ENCODE measurements at regions of chr2 and their contacts with region 1.

Region 1: GRCh38 chr2:86518481-86518880 is 44.8 kb downstream of the CHMP3 start:
- DNase-seq: peak; percentile 49
- H3K4me3 ChIP-seq: no peak overlapping the region
- H3K27ac ChIP-seq: no peak overlapping the region
- H3K4me1 ChIP-seq: no peaks in the 10 kb centered on the region
- H3K27me3 ChIP-seq: no peaks in the 10 kb centered on the region
- CTCF ChIP-seq: peak; percentile 54

Region 2: GRCh38 chr2:86249579-86250391 is 268.7 kb before region 1 on chr2:
- CTCF ChIA-PET with region 1: no interaction called
- POLR2A ChIA-PET with region 1: no interaction called
- intact Hi-C with region 1: no loop called
- DNase-seq: no peak
- H3K4me3 ChIP-seq: no peak overlapping the region
- H3K27ac ChIP-seq: no peak overlapping the region
- H3K4me1 ChIP-seq: no peaks in the 10 kb centered on the region
- H3K27me3 ChIP-seq: no peaks in the 10 kb centered on the region
- CTCF ChIP-seq: no peak

Region 3: GRCh38 chr2:86492048-86492453 is 26.4 kb before region 1 on chr2:
- CTCF ChIA-PET with region 1: interaction called, 11 read pairs
- POLR2A ChIA-PET with region 1: interaction called, 8 read pairs
- intact Hi-C with region 1: no loop called
- DNase-seq: no peak
- H3K4me3 ChIP-seq: no peak overlapping the region
- H3K27ac ChIP-seq: no peak overlapping the region
- H3K4me1 ChIP-seq: no peaks in the 10 kb centered on the region
- H3K27me3 ChIP-seq: no peaks in the 10 kb centered on the region
- CTCF ChIP-seq: no peak

Measured in A673 (cell line).